K562 (cell line): ENCODE measurements at regions of chr3 and their contacts with region 1.

Region 1: GRCh38 chr3:15098503-15099363 is at the start of gene RBSN:
- DNase-seq: peak; percentile 96 to 99 (median 97)
- ATAC-seq: peak; percentile 93
- H3K4me3 ChIP-seq: peak within 1 kb of the TSS; percentile 80
- H3K27ac ChIP-seq: peak within 1 kb of the TSS; percentile 78
- H3K4me1 ChIP-seq: peaks cover 16 to 24% of the 10 kb centered on the region in 2 experiments
- H3K27me3 ChIP-seq: no peaks in the 10 kb centered on the region
- CTCF ChIP-seq: peak in 2 of 3 experiments; percentile 2 to 17; a peak in 1 of 6 replicates
- EP300 ChIP-seq: peak; percentile 76
- POLR2A ChIP-seq: peak; percentile 91
- RAD21 ChIP-seq: peak in 1 of 2 experiments; percentile 21; a peak in 1 of 4 replicates
- polyA plus RNA-seq, gene RBSN: 2.9 to 4.2 TPM

Region 2: GRCh38 chr3:14976317-14976716 is 122.4 kb before region 1 on chr3:
- CTCF ChIA-PET with region 1: no interaction called
- POLR2A ChIA-PET with region 1: no interaction called
- in situ Hi-C with region 1: no loop called
- intact Hi-C with region 1: no loop called
- DNase-seq: no peak
- ATAC-seq: no peak
- H3K4me3 ChIP-seq: no peak overlapping the region
- H3K27ac ChIP-seq: no peak overlapping the region
- H3K4me1 ChIP-seq: no peaks in the 10 kb centered on the region; a peak in 1 of 5 replicates
- H3K27me3 ChIP-seq: no peaks in the 10 kb centered on the region
- CTCF ChIP-seq: no peak
- EP300 ChIP-seq: no peak
- POLR2A ChIP-seq: no peak
- RAD21 ChIP-seq: no peak

Region 3: DNA sequence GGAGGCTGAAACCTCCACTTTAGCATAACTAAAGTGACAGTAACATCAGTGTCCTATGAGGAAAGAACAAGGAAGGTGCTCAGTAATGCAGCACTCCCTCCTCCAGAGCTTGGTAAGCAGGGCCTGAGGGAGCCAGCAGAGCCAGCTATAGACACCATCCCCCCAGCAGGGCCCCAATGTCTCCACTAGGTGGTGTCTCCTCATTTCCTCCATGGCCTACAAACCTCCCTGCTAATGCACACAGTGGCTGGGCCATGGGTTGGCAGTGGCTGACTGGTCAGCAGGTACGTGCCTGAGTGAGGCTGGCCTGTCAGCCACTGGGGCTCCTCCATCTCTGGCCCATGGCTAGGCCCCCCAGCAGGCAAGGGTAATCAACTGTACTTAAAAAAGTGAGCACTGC is 47.2 kb before region 1 on chr3:
- CTCF ChIA-PET with region 1: no interaction called
- POLR2A ChIA-PET with region 1: interaction called, 3 read pairs
- in situ Hi-C with region 1: no loop called
- intact Hi-C with region 1: loop called (anchors 2 kb)
- DNase-seq: peak; percentile 69 to 79 (median 72)
- ATAC-seq: peak; percentile 90
- H3K4me3 ChIP-seq: no peak overlapping the region
- H3K27ac ChIP-seq: peak overlapping the region; percentile 7; the same call in 1 of the 3 replicates
- H3K4me1 ChIP-seq: peaks cover 33 to 43% of the 10 kb centered on the region in 2 experiments
- H3K27me3 ChIP-seq: no peaks in the 10 kb centered on the region
- CTCF ChIP-seq: peak; percentile 76 to 90 (median 77)
- EP300 ChIP-seq: no peak
- POLR2A ChIP-seq: peak; percentile 18; the same call in 1 of the 2 replicates
- RAD21 ChIP-seq: peak; percentile 6 to 51; a peak in 2 of 4 replicates

Region 4: DNA sequence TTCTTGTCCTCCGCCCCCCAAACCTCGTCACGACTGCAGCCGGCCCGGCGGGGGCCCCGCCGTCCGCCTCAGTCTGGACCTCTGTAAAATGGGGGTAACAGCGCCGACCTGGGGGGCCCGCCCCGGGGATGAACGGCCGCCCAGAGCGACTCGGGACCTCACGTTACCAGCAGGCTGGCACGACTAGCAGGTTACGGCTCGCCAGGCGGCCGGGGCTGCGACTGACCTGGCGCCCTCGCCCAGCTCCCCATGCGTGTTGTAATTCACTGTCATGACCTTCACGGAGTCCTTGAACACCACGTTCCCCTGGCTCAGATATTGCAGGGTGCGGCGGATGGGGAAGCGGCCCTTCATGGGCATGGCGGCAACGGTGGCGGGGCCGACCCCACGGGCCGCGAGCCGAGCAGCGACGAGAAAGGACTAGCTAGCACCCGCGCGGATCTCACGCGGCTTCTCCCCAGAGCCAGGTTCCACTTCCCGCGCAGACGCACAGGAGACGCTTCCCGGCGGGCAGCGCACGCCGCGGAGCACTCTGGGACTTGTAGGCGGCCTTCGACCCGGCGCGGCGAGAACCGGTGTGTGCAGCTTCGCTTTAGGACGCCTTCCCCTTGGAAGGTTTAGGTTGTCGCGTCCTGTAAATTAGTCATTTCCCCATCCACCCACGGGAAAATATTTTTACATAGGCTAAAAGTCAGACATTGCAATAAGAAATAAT is 33.7 kb before region 1 on chr3 and contains the start of gene MRPS25:
- CTCF ChIA-PET with region 1: no interaction called
- POLR2A ChIA-PET with region 1: interaction called, 19 read pairs
- in situ Hi-C with region 1: no loop called
- intact Hi-C with region 1: loop called (anchors 2 kb)
- DNase-seq: peak; percentile 95 to 97 (median 96)
- ATAC-seq: peak; percentile 98
- H3K4me3 ChIP-seq: peak within 1 kb of the TSS; percentile 93
- H3K27ac ChIP-seq: peak within 1 kb of the TSS; percentile 99
- H3K4me1 ChIP-seq: peaks cover 18 to 27% of the 10 kb centered on the region in 2 experiments; a peak in 4 of 5 replicates
- H3K27me3 ChIP-seq: no peaks in the 10 kb centered on the region
- CTCF ChIP-seq: 0 out of 6 replicates have a peak, but pooled peaks of 2 of the 3 experiments have one; percentile 1 to 12
- EP300 ChIP-seq: peak; percentile 33; the same call in 1 of the 2 replicates
- POLR2A ChIP-seq: peak; percentile 99
- RAD21 ChIP-seq: 0 out of 4 replicates have a peak, but pooled peaks of 1 of the 2 experiments have one; percentile 5
- polyA plus RNA-seq, gene MRPS25: 34.3 to 65.1 TPM

Region 5: GRCh38 chr3:15071699-15072098 is 27.0 kb before region 1 on chr3:
- CTCF ChIA-PET with region 1: no interaction called
- POLR2A ChIA-PET with region 1: interaction called, 11 read pairs
- in situ Hi-C with region 1: no loop called
- intact Hi-C with region 1: loop called (anchors 2 kb)
- DNase-seq: no peak
- ATAC-seq: no peak
- H3K4me3 ChIP-seq: no peak overlapping the region
- H3K27ac ChIP-seq: no peak overlapping the region
- H3K4me1 ChIP-seq: no peaks in the 10 kb centered on the region
- H3K27me3 ChIP-seq: no peaks in the 10 kb centered on the region
- CTCF ChIP-seq: no peak
- EP300 ChIP-seq: no peak
- POLR2A ChIP-seq: no peak
- RAD21 ChIP-seq: no peak

Region 6: GRCh38 chr3:15356186-15356585 is 257.5 kb after region 1 on chr3:
- CTCF ChIA-PET with region 1: no interaction called
- POLR2A ChIA-PET with region 1: no interaction called
- in situ Hi-C with region 1: no loop called
- intact Hi-C with region 1: no loop called
- DNase-seq: no peak
- ATAC-seq: no peak
- H3K4me3 ChIP-seq: no peak overlapping the region
- H3K27ac ChIP-seq: no peak overlapping the region
- H3K4me1 ChIP-seq: no peaks in the 10 kb centered on the region; a peak in 1 of 5 replicates
- H3K27me3 ChIP-seq: no peaks in the 10 kb centered on the region
- CTCF ChIP-seq: no peak
- EP300 ChIP-seq: no peak
- POLR2A ChIP-seq: no peak
- RAD21 ChIP-seq: no peak